Naive thymus-derived CD4-positive, alpha-beta T cell (primary cell): ENCODE measurements at regions of chr6 and their contacts with region 1.

Region 1: DNA sequence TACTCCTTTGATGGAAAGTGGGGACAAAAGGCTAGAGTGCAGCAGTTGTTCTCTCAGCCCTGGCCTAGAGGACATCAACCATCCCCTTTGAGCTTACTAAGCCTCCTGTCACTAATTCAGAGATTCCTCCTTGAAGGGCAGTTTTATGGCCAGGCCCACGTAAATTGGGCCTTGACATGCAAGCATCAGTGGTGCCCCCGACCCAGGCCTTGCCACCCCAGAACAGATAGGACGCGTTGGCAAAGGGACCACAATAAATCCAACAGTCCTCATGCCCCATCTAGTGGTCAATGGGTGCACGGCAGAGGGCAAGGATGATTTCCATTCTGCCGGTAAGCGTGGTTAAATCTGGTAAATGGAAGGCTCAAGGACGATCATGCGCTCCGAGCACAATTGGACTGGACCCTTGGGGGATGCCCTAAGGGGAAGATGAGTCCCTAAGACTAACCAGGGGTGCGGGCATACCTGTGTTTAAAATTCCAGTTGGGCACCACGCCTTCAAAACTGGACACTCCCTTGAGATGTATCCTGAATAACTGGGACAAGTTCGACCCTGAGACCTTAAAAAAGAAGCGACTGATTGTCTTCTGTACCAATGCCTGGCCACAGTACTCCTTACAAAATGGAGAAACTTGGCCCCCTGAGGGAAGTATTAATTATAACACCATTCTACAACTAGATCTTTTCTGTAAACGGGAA is 32.6 kb downstream of the CEP85L start:
- DNase-seq: peak; percentile 36 to 70 (median 55)
- ATAC-seq: peak; percentile 92
- H3K4me3 ChIP-seq: no peak overlapping the region
- H3K4me3 Mint-ChIP-seq: peak overlapping the region in 3 of 10 donors; percentile 2 to 52 (median 46)
- H3K27ac ChIP-seq: no peak overlapping the region
- H3K27ac Mint-ChIP-seq: peak overlapping the region; percentile 26 to 96 (median 79)
- H3K4me1 ChIP-seq: peaks cover 0 to 8% of the 10 kb centered on the region in 2 donors
- H3K4me1 Mint-ChIP-seq: peaks cover 21 to 86% (median 77%) of the 10 kb centered on the region in 7 donors
- H3K27me3 ChIP-seq: no peaks in the 10 kb centered on the region
- H3K27me3 Mint-ChIP-seq: no peaks in the 10 kb centered on the region

Region 2: GRCh38 chr6:118485601-118486550 is 133.0 kb before region 1 on chr6:
- CTCF ChIA-PET with region 1: no interaction called
- POLR2A ChIA-PET with region 1: no interaction called
- intact Hi-C with region 1: no loop called
- DNase-seq: no peak
- ATAC-seq: no peak
- H3K4me3 ChIP-seq: no peak overlapping the region
- H3K4me3 Mint-ChIP-seq: no peak overlapping the region
- H3K27ac ChIP-seq: no peak overlapping the region
- H3K27ac Mint-ChIP-seq: peak overlapping the region in 3 of 9 donors; percentile 4 to 25 (median 17)
- H3K4me1 ChIP-seq: no peaks in the 10 kb centered on the region
- H3K4me1 Mint-ChIP-seq: peaks cover 0 to 14% (median 4%) of the 10 kb centered on the region in 7 donors
- H3K27me3 ChIP-seq: no peaks in the 10 kb centered on the region
- H3K27me3 Mint-ChIP-seq: no peaks in the 10 kb centered on the region

Region 3: GRCh38 chr6:118606268-118606667 is 12.6 kb before region 1 on chr6:
- CTCF ChIA-PET with region 1: interaction called, 4 read pairs
- POLR2A ChIA-PET with region 1: interaction called, 3 read pairs
- intact Hi-C with region 1: loop called in 1 of 2 experiments (anchors 1 kb)
- DNase-seq: no peak
- ATAC-seq: no peak
- H3K4me3 ChIP-seq: no peak overlapping the region
- H3K4me3 Mint-ChIP-seq: peak overlapping the region in 6 of 10 donors; percentile 8 to 51 (median 23)
- H3K27ac ChIP-seq: no peak overlapping the region
- H3K27ac Mint-ChIP-seq: peak overlapping the region in 6 of 9 donors; percentile 25 to 83 (median 41)
- H3K4me1 ChIP-seq: peaks cover 0 to 3% of the 10 kb centered on the region in 2 donors
- H3K4me1 Mint-ChIP-seq: peaks cover 24 to 70% (median 65%) of the 10 kb centered on the region in 7 donors
- H3K27me3 ChIP-seq: no peaks in the 10 kb centered on the region
- H3K27me3 Mint-ChIP-seq: no peaks in the 10 kb centered on the region

Region 4: DNA sequence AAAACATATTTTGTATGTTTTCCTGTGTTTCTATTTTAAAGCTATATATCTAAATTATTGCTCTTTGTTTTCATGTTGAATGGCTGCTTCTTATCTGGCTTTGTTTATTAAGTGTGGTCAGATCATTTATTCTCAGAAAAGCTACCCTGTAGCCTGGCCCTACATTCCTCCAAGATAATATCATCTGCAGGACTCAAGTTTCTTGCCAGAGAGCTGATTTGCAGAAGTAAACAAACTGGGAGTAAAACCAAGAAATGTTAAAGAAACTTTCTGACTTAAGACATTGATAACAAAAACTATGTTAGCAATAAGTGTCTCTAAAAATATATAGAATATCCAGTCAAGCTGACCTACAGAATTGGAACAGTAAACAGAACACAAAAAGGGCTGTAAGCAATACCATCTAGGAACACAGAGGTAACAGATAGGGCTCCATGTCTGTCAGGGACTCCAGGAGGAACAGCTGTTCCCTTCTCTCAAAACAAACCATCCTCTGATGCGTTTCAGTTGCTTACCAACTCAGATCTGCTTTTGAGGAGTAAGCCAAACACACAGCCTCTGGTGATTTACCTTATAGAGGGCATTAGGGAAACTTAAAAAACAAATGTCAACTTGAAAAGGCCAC is 50.0 kb after region 1 on chr6:
- CTCF ChIA-PET with region 1: no interaction called
- POLR2A ChIA-PET with region 1: no interaction called
- intact Hi-C with region 1: no loop called
- DNase-seq: no peak
- ATAC-seq: no peak
- H3K4me3 ChIP-seq: no peak overlapping the region
- H3K4me3 Mint-ChIP-seq: peak overlapping the region in 3 of 10 donors; percentile 7 to 28 (median 19)
- H3K27ac ChIP-seq: peak overlapping the region; percentile 20
- H3K27ac Mint-ChIP-seq: peak overlapping the region in 8 of 9 donors; percentile 5 to 93 (median 86)
- H3K4me1 ChIP-seq: peaks cover 4 to 28% of the 10 kb centered on the region in 2 donors
- H3K4me1 Mint-ChIP-seq: peaks cover 36 to 94% (median 87%) of the 10 kb centered on the region in 7 donors
- H3K27me3 ChIP-seq: no peaks in the 10 kb centered on the region
- H3K27me3 Mint-ChIP-seq: no peaks in the 10 kb centered on the region